ENCODE measurements at regions of chr21 and their contacts with region 1.

Region 1: DNA sequence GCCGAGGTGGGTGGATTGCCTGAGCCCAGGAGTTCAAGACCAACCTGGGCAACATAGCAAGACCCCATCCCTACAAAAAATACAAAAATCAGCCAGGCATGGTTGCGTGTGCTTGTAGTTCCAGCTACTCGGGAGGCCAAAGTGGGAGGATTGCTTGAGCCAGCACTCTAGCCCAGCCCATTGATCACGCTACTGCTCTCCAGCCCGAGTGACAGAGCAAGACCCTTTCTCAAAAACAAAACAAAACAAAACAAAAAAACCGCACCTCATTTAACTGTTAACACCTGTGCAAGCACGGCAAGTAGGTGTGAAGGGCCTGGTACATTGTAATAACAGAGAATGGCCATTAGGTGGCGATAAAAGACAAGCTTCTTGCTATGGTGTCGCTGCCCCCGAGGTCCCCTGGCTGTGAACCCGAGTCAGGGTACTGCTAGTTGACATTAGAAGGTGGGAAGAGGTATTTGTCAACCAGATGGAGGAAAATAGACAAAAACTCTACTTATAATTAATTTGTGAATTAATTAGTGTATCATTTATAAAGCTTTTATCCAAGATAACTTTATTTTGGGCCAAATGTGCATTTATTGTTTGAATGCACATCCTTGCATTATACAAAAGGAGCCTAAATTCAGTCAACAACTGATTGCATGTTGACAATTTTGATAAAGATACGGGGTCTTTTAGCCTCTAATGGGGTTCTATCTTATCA is 66.5 kb downstream of the SH3BGR start:
- DNase-seq: peak; percentile 71
- ATAC-seq: peak; percentile 99
- H3K4me3 ChIP-seq: no peak overlapping the region
- H3K27ac ChIP-seq: no peak overlapping the region
- H3K4me1 ChIP-seq: peaks cover 0 to 2% of the 10 kb centered on the region in 2 experiments; a peak in 1 of 4 replicates
- H3K27me3 ChIP-seq: no peaks in the 10 kb centered on the region
- CTCF ChIP-seq: peak; percentile 74 to 92 (median 88); a peak in 5 of 6 replicates
- POLR2A ChIP-seq: no peak
- RAD21 ChIP-seq: peak; percentile 88

Region 2: GRCh38 chr21:39705849-39706248 is 187.6 kb after region 1 on chr21:
- CTCF ChIA-PET with region 1: interaction called, 13 read pairs
- POLR2A ChIA-PET with region 1: no interaction called
- RAD21 ChIA-PET with region 1: interaction called, 3 read pairs
- intact Hi-C with region 1: loop called (anchors 2 kb)
- DNase-seq: no peak
- ATAC-seq: no peak
- H3K4me3 ChIP-seq: no peak overlapping the region
- H3K27ac ChIP-seq: no peak overlapping the region
- H3K4me1 ChIP-seq: no peaks in the 10 kb centered on the region
- H3K27me3 ChIP-seq: no peaks in the 10 kb centered on the region
- CTCF ChIP-seq: peak in 1 of 3 experiments; percentile 42; a peak in 2 of 6 replicates
- POLR2A ChIP-seq: no peak
- RAD21 ChIP-seq: peak; percentile 54

Region 3: DNA sequence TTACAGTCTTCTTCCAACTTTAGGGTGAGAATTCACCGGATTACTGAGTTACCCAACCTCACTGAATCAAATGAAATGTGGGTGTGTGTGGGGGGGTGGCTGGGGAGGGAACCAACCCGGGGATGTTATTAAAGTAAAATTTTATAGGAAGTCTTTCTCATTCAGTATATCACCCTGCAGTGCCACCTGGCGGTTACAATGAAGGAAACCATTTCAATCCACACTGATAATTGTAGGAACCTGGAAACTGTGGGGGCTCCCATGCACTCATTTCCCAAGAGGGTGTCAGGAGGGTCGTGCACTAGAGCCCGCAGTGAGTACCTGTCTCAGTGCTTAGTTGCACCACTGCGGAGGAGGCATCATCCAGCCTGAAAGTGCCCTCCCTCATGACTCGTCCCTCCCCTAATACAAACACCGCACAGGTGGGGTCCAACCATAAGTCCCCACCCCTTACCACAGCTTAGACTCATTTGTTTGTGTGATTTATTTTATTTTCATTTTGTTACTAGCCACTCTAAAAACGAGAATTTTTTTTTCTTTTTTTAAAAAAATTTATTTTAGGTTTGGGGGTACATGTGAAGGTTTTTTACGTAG is 197.6 kb after region 1 on chr21:
- CTCF ChIA-PET with region 1: interaction called, 20 read pairs
- POLR2A ChIA-PET with region 1: no interaction called
- RAD21 ChIA-PET with region 1: interaction called in 1 of 2 experiments, 6 read pairs
- intact Hi-C with region 1: loop called (anchors 1 kb)
- DNase-seq: peak; percentile 28
- ATAC-seq: peak; percentile 79
- H3K4me3 ChIP-seq: no peak overlapping the region
- H3K27ac ChIP-seq: no peak overlapping the region
- H3K4me1 ChIP-seq: no peaks in the 10 kb centered on the region
- H3K27me3 ChIP-seq: no peaks in the 10 kb centered on the region; the same call in 1 of the 2 replicates
- CTCF ChIP-seq: peak; percentile 48 to 67 (median 52); a peak in 5 of 6 replicates
- POLR2A ChIP-seq: no peak
- RAD21 ChIP-seq: peak; percentile 63

Region 4: DNA sequence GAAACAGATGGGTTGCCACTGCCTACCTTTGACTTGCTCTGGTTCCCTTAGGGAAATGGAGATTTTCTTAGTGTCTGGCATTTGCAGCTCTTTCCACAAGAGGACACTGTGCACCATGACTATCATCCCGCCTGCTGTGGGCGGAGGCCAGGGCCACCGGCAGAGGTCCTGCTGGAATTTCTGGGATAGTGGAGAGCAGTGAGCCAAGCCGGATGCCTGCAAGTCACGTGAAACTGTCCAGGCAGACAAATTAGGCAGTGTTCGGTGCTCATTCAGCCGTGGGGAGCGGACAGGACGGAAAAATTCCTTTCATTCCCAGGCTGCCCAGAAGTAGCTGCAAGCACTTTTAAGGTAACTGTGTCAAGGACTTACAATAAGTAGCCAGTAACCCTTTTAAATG is 270.1 kb after region 1 on chr21:
- CTCF ChIA-PET with region 1: no interaction called
- POLR2A ChIA-PET with region 1: no interaction called
- RAD21 ChIA-PET with region 1: no interaction called
- intact Hi-C with region 1: loop called (anchors 5 kb)
- DNase-seq: peak; percentile 66
- ATAC-seq: peak; percentile 100
- H3K4me3 ChIP-seq: no peak overlapping the region; a peak in 1 of 4 replicates
- H3K27ac ChIP-seq: no peak overlapping the region
- H3K4me1 ChIP-seq: peaks cover 5 to 9% of the 10 kb centered on the region in 2 experiments; a peak in 2 of 4 replicates
- H3K27me3 ChIP-seq: no peaks in the 10 kb centered on the region
- CTCF ChIP-seq: peak; percentile 86 to 95 (median 93)
- POLR2A ChIP-seq: no peak
- RAD21 ChIP-seq: peak; percentile 76

Region 5: GRCh38 chr21:40120940-40121575 is 602.8 kb after region 1 on chr21:
- CTCF ChIA-PET with region 1: no interaction called
- POLR2A ChIA-PET with region 1: no interaction called
- RAD21 ChIA-PET with region 1: no interaction called
- intact Hi-C with region 1: loop called (anchors 2 kb)
- DNase-seq: no peak
- ATAC-seq: no peak
- H3K4me3 ChIP-seq: no peak overlapping the region
- H3K27ac ChIP-seq: no peak overlapping the region
- H3K4me1 ChIP-seq: no peaks in the 10 kb centered on the region
- H3K27me3 ChIP-seq: no peaks in the 10 kb centered on the region
- CTCF ChIP-seq: peak; percentile 20 to 62 (median 51); a peak in 5 of 6 replicates
- POLR2A ChIP-seq: no peak
- RAD21 ChIP-seq: peak; percentile 38; the same call in 1 of the 2 replicates

Measured in HCT116 (cell line).